Adrenal gland (tissue), 19 donors: ENCODE measurements at regions of chr10 and their contacts with region 1.

Region 1: DNA sequence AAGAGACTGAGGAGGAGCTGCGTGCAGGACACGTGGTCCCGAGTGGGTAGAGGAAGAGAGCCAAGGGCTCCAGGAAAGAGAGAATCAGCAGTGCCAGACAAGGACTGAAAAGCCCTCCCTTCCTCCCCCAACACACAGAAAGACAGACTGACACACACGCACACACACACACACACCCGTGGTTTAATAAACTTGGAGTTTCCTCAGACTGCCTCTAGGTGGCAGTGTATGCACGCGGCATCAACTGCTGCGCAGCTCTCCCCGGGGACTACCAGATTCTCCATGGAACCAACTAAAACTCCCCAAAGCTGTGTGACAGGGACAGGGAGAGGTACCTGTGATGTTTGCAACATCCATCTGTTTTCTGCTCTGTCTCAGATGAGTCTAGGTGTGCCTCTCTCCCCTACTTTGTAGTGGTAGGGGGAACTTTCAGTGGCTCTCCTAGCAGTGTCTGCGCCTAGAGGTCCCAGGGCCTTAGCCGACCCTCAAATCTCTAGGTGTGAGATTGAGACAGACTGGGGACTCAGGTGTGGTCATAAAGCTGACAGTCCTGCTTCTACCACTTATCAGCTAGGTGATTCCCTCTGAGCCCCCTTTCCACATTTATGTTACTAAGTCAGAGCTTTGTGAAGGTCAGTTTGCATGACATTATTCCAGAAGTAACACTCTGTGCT is 9.3 kb upstream of the TSPAN14 start:
- DNase-seq: peak; percentile 66 to 86 (median 76)
- H3K4me3 ChIP-seq: no peak overlapping the region
- H3K27ac ChIP-seq: peak overlapping the region in 1 of 5 donors; percentile 34
- H3K4me1 ChIP-seq: peaks cover 0 to 4% of the 10 kb centered on the region in 2 donors
- H3K27me3 ChIP-seq: no peaks in the 10 kb centered on the region
- CTCF ChIP-seq: peak in 5 of 6 experiments; percentile 36 to 98 (median 70)
- POLR2A ChIP-seq: no peak

Region 2: GRCh38 chr10:80313523-80313922 is 131.3 kb before region 1 on chr10:
- intact Hi-C with region 1: no loop called
- DNase-seq: no peak
- H3K4me3 ChIP-seq: no peak overlapping the region
- H3K27ac ChIP-seq: no peak overlapping the region
- H3K4me1 ChIP-seq: no peaks in the 10 kb centered on the region
- H3K27me3 ChIP-seq: no peaks in the 10 kb centered on the region
- CTCF ChIP-seq: no peak
- POLR2A ChIP-seq: no peak

Region 3: DNA sequence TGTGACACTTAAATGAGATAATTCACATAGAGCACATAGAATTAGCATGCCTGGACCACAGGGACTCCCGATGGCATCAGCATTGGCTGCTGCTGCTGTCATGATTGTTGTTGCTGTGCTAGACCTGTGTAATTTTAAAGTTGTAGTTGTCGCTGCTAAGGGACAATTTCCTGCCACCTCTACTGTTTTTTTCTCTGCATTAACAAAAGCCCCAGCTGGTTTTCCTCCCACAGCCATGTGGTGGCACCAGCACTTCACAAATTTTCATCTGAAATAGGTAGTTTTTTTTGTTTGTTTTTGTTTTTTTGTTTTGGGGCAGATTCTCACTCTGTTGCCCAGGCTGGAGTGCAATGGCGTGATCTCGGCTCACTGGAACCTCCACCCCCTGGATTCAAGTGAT is 61.8 kb before region 1 on chr10:
- intact Hi-C with region 1: loop called in 1 of 2 experiments (anchors 5 kb)
- DNase-seq: peak in 6 of 7 donors; percentile 25 to 73 (median 46)
- H3K4me3 ChIP-seq: no peak overlapping the region
- H3K27ac ChIP-seq: no peak overlapping the region
- H3K4me1 ChIP-seq: peaks cover 0 to 6% of the 10 kb centered on the region in 2 donors
- H3K27me3 ChIP-seq: no peaks in the 10 kb centered on the region
- CTCF ChIP-seq: peak; percentile 33 to 77 (median 63)
- POLR2A ChIP-seq: no peak

Region 4: DNA sequence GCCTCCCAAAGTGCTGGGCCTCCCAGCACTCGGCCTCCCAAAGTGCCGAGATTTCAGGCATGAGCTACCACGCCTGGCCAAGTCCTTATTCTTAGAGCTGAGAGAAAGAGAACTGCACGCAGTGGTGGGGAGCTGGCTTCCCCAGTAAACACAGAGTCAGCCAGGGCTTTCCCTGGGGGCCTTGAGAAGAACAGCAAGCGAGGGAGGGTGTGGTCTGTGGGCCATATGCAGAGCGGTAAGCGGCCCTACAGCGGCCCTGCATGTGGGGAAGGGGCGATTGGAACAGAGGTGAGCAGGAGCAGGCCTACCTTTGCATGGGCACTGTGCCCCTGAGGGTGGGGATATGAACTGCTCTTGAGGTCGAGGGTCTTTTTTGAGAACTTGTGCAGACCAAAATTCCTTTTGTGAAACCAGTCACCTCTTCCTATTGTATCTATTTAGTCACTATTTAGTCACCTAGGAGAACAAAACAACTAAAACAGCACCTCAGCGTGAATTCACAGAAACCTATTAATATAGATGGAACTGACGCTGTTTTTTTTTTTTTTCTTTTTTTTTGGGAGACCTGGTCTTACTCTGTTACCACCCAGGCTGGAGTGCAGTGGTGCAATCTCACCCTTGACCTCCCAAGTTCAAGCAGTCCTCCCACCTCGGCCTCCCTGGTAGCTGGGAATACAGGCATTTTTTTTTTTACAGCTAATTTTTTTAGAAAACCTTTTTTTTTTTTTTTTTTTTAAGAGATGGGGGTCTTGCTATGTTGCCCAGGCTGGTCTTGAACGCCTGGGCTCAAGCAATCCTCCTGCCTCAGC is 56.0 kb after region 1 on chr10:
- intact Hi-C with region 1: loop called (anchors 2 kb)
- DNase-seq: peak in 2 of 7 donors; percentile 26 to 54
- H3K4me3 ChIP-seq: no peak overlapping the region
- H3K27ac ChIP-seq: peak overlapping the region in 4 of 5 donors; percentile 8 to 98 (median 88)
- H3K4me1 ChIP-seq: peaks cover 38 to 81% of the 10 kb centered on the region in 2 donors
- H3K27me3 ChIP-seq: no peaks in the 10 kb centered on the region
- CTCF ChIP-seq: no peak
- POLR2A ChIP-seq: no peak

Region 5: DNA sequence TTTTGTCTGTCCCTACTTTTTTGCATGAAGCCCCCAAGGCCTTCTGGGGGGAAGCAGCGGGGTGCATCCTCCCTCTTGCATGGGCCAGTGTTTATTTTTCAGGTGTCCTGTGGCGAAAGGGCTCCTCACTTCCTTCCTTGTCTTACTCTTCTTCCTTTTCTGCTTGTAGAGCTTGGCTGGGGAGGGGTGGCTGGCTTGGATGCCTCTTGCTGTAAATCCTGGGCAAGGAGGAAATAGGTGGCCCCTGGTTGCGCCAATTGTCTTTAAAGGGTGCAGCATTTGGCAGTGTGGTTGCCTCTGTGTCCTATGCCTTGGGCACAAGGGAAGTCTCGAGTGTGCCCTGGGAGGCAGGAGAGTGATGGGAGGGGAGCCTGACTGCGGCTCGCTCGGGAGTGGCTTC is 188.0 kb after region 1 on chr10:
- intact Hi-C with region 1: no loop called
- DNase-seq: no peak
- H3K4me3 ChIP-seq: no peak overlapping the region
- H3K27ac ChIP-seq: no peak overlapping the region
- H3K4me1 ChIP-seq: no peaks in the 10 kb centered on the region
- H3K27me3 ChIP-seq: no peaks in the 10 kb centered on the region
- CTCF ChIP-seq: no peak
- POLR2A ChIP-seq: no peak